Endothelial cell of umbilical vein (primary cell): ENCODE measurements at regions of chr9 and their contacts with region 1.

Region 1: DNA sequence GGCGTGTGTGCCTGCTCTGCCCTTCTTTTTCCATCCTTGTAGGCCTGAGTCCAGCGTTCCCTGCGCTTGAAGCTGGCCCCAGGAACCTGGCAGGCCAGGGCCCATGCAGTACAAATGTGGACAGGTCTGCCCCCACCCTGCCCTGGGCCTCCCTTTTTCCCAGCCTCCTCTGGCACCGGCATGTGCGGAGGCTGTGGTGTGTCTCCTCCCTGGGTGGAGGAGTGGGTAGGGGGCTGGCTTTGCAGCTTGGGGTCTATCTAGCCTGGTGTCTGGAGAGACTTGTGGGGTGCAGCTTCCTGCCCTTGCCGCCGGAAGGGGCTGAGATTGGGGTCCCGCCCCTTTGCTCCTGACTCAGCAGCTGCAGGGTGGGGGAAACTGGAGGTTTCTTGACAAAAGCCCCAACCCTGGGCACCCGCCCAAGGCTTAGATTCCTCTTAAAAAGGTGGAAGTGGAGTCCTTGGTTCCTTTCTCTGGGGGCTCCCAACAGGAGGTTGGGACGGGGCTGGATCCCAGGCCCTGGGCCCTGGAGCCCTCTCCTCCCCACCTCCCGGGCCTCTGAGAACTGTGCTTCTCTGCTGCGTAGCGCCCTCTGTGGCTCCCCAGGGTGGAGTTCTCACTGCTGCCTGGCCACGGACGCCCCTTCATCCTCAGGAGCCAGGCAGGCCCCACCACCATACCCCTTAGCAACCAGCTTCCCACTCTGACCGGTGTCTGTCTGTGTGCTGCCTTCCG is 18.0 kb downstream of the RXRA start:
- DNase-seq: no peak
- H3K4me3 ChIP-seq: no peak overlapping the region
- H3K27ac ChIP-seq: no peak overlapping the region
- H3K4me1 ChIP-seq: peaks cover 34% of the 10 kb centered on the region
- H3K27me3 ChIP-seq: no peaks in the 10 kb centered on the region
- CTCF ChIP-seq: peak in 1 of 2 donors; percentile 14
- POLR2A ChIP-seq: no peak

Region 2: GRCh38 chr9:134283111-134283515 is 61.1 kb before region 1 on chr9:
- CTCF ChIA-PET with region 1: no interaction called
- POLR2A ChIA-PET with region 1: no interaction called
- dilution Hi-C with region 1: no loop called
- intact Hi-C with region 1: no loop called
- DNase-seq: peak; percentile 28
- H3K4me3 ChIP-seq: no peak overlapping the region
- H3K27ac ChIP-seq: no peak overlapping the region
- H3K4me1 ChIP-seq: no peaks in the 10 kb centered on the region
- H3K27me3 ChIP-seq: peaks cover 0 to 3% of the 10 kb centered on the region in 2 experiments
- CTCF ChIP-seq: no peak
- POLR2A ChIP-seq: no peak

Region 3: DNA sequence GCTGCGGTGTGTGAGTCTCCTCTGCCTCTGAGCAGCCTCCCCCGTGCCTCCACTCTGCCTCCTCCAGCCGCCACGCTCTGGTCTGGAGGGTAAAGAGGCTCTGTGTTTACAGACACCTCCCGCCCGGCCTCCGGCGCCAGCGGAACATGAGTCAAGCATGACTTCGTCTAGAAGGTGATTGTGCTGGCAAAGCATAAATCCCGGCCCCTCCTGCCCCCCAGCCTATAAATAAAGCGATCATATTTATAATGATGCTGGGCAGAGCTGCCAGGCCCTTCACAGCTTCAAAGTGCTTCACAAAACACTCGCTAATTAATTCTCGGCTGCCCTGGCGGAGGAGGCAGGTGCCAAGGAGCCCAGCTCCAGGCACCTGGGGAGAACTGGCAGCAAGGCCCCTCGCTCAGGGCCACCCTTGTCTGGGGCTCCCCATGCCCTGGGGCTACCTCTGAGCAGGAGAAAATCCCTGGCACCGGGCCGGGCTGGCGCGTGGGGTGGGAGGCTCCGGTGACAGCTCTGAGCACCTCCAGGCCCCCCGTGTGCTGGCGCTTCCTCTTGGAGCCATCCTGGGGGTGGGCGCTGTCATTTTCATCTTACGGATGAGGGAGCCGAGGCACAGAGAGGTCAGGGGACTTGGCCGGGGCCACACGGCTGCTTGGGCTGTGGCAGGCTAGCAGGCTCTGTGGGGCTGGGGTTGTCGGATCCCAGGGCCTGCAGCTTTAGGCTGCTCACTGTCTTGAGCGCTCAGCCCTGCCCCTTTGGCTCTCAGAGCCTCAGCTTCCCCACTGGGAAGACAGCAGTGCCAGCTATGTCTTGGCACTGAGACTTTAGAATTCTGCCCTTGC is 69.9 kb after region 1 on chr9:
- CTCF ChIA-PET with region 1: no interaction called
- POLR2A ChIA-PET with region 1: interaction called, 3 read pairs
- dilution Hi-C with region 1: no loop called
- intact Hi-C with region 1: loop called (anchors 1 kb)
- DNase-seq: peak; percentile 94
- H3K4me3 ChIP-seq: no peak overlapping the region
- H3K27ac ChIP-seq: peak overlapping the region; percentile 66
- H3K4me1 ChIP-seq: peaks cover 26% of the 10 kb centered on the region
- H3K27me3 ChIP-seq: no peaks in the 10 kb centered on the region
- CTCF ChIP-seq: no peak
- POLR2A ChIP-seq: no peak